ENCODE measurements at regions of chr6 and their contacts with region 1.

Region 1: DNA sequence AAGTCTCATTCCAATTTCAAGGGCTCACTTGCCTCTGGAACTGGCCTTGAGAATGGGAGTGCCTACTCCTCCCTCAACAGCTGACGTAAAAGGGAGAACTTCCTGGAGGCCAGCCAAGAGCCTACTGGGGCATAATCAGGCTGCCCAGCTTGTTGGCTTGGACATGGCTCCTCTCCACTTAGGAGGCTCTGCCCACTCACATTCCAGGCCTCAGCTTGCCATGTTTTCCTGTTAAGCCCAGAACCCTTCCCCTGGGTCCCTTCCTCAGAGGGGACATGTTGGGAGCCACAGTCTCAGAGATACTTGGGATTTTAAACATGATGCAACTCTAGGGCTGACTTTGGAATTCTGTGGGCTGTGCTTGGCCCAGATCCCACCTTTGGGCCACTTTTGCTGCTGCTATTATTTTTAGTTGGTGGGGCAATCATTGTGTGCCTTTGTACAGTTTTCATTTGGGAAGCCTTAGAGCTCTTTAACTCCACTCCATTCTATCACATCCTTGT is 31.5 kb upstream of the ADTRP start:
- DNase-seq: peak; percentile 88
- ATAC-seq: peak; percentile 95

Region 2: DNA sequence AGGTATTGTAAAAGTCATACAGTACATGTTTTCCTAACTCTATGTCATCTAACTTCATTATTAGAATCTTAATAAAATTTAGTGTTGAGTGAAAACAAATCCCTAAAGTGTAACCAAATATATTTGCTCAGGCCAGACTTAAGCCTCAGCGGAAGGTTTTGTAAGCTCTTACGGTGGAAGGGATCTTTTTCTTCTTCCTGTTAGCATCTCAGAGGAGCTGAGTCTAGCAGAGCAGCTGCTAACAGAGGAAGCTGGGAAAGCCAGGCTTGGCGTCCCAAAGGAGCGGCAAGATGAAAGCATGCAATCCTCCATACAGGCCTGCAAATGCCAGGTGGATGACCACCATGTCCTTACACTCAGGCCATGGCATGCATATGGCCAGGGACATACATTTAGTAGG is 103.9 kb before region 1 on chr6:
- intact Hi-C with region 1: loop called in 1 of 2 experiments (anchors 5 kb)
- DNase-seq: no peak
- ATAC-seq: no peak

Region 3: DNA sequence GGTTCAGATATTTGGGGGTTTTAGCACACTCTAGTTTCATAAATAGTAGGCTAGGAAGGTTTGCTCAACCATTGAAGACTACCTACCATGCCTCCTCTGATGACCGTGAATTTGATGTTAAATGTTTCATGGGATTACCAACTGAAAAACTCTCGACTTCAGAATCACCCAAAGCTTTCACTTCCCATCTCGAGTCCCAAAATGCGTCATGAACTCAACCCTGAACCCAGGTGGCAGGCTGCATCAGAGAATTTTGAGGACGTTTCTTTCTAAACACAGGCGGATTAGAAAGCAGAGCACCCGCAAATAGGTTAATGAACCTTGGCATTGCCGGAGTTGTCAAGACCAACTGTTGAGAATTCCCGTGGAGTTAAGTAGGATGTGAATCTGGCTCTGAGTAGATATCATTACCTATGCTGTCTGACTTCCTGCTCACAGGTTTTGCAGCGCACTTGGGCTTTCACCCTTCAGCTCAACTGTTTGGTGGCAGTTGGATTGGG is 66.9 kb after region 1 on chr6:
- intact Hi-C with region 1: no loop called
- DNase-seq: no peak
- ATAC-seq: no peak

Region 4: DNA sequence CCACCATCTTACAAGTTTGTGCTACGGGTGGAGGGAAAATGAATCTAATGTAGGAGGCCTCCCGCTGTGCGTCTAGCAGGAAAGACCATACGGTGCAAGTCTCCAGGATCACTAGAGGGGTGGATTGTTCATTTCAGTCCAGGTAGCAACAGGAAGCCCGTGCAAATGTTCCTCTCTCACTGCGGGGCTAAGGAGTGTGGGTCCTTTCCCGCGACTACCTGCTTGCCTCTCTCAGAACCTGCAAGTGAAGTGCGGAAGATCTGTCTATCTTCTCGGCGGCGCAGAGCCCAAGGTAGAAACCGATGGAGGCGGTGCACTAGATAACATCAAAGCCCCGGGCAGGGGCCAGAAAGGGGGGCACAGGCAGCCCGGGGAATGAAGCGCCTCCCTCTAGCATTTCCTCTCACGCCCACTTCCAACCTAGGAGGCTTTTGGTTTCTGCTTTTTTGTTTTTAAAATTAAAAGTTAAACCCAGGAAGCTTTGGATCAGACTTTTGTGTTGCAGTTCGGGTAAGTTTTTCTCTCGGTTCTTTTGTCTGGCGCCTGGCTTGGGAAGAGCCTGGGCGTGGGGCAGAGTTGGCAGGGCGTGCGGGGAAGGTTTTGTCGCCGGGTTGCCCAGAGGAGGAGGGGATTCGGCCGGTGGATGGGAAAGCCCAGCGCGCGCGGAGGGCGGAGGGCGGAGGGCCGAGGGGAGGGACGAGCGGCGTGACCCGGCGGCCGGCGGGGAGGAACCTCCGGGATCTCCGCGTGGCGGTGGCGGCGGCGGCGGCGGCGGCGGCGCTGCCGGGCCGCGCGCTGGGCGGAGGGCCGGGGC is 198.5 kb after region 1 on chr6:
- intact Hi-C with region 1: loop called in 1 of 2 experiments (anchors 10 kb)
- DNase-seq: peak; percentile 90
- ATAC-seq: peak; percentile 39 to 48

Measured in left cardiac atrium (tissue), 4 donors.